ENCODE measurements at regions of chr1 and their contacts with region 1.

Region 1: DNA sequence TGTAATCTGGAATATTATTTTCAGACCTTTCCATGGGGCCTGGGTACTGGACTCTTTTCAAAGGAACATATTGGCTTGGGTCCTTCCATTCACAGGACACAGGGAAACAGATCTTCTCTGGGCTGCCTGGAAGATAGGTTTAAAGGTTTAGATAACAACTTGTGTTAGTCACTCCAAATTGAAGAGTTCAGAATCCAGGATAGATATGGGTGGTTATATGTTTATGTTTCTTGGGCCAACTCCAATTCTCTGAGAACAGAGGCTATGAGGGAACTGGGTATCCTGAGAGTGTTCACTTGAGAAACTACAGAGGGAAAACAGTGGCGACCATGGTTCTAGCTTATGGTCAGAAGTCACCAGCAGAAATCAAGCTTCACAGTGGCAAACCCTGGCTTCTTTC is 8.7 kb upstream of the PIGM start:
- DNase-seq: no peak

Region 2: DNA sequence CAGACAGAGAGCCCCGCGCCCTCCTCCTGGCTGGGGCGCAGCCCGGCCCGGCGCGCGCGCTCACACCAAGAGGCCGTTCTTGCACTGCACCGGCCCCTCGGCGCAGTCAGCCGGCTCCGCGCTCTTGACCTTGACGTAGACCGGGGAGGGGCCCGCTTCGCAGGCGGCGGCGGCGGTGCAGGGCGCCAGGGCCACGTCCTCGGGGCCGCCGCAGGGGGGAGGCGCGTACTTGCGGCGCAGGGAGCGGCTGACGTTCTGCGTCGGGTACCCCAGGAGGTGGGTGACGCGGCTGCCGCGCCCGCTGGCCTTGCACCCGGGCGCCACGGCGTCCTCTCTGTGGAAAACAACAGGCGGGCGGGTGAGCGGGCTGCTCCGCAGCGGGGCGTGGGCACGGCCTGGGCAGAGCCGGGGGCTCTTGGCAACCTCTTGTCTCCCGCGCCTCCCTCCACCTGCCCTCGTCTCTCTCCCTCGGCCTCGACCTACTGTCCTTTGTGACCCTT is 185.7 kb before region 1 on chr1:
- intact Hi-C with region 1: no loop called
- DNase-seq: peak; percentile 60 to 95 (median 88)

Region 3: DNA sequence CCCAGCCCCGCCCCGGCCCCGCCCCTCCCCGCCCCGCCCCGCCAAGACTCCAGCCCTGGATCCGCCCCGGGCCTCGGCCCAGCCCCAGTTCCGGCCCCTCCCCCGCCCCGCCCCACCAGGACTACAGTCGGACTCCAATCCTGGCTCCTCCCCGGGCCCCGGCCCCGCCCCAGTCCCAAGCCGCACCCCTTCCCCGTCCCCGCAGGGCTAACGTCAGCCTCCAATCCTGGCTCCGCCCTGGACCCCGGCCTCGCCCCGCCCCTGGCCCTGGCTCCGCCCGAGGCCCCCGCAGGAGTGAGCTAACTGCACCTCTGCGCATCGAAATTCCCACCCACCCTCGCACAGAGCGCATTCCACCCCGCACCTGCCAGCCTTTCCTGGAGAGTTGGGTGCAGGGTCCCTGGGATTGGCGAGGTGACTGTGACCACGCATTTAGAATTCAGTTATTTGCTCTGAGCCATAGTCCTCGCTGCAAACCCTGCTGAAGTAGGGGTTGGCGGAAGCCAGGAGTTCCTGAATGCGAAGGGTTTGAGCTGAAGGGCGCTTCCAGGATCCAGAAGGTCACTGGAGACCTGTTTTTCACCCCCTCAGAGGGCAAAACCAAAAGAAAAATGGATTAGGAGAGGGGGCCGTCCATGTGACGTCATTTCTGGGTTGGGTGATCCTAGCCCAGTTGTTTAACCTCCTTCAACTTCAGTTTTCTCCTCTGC is 58.5 kb after region 1 on chr1:
- intact Hi-C with region 1: no loop called
- DNase-seq: peak; percentile 95 to 100 (median 99)

Region 4: DNA sequence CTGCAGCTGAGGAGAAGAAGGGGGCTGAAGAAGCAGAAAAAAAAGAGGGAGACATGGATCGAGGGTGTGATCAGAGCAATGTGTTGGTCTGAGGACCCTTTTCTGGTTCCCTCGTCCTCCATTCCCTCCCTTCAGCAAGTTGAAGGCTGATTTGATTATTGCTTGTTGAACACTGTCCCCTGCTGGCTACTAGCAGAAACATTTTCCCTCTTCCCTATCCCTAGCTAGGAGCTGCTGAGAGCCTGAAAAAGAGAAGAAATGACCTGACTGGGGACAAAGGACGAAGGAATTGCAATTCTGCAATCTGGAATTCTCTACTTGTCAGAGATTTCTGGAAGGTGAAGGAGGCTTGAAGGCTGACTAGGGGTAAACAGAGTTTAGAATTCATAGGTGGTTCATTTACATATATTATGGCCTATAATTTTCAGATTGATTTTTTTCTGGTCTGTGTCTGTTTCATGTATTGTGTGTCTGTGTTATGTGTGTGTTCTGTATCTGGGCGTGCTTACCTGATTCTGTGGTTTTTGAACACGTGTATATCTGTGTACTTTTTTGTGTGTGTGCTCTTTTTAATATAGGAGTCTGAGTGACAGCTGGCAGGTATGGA is 336.2 kb after region 1 on chr1:
- intact Hi-C with region 1: loop called (anchors 5 kb)
- DNase-seq: peak in 27 of 42 donors; percentile 43 to 83 (median 69)

Measured in head of caudate nucleus (tissue), 42 donors.